Vagina (tissue), 2 donors: ENCODE measurements at regions of chr7 and their contacts with region 1.

Region 1: DNA sequence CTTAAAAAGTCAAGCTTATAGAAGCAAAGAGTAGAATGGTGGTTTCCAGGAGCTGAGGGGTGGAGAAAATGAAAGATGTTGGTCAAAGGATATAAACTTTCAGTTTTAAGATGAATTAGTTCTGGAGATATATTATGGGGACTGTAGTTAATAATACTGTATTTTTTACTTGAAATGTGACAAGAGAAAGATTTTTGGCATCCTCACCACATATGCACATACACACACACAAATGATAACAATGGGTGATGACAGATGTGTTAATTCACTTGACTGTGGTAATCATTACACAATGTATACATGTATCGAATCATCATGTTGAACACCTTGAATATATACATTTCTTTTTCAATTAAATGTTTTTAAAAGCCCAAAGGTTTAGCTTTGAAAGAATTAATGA is 32.7 kb upstream of the ZPBP start:
- DNase-seq: no peak
- H3K4me3 ChIP-seq: no peak overlapping the region
- H3K27ac ChIP-seq: no peak overlapping the region
- H3K4me1 ChIP-seq: no peaks in the 10 kb centered on the region
- H3K27me3 ChIP-seq: no peaks in the 10 kb centered on the region
- CTCF ChIP-seq: no peak
- POLR2A ChIP-seq: no peak

Region 2: GRCh38 chr7:51543801-51544553 is 1418.2 kb after region 1 on chr7:
- intact Hi-C with region 1: loop called (anchors 5 kb)
- DNase-seq: peak in 1 of 2 donors; percentile 58
- H3K4me3 ChIP-seq: no peak overlapping the region
- H3K27ac ChIP-seq: no peak overlapping the region
- H3K4me1 ChIP-seq: no peaks in the 10 kb centered on the region
- H3K27me3 ChIP-seq: no peaks in the 10 kb centered on the region
- CTCF ChIP-seq: no peak
- POLR2A ChIP-seq: no peak